ENCODE measurements at regions of chr9 and their contacts with region 1.

Region 1: DNA sequence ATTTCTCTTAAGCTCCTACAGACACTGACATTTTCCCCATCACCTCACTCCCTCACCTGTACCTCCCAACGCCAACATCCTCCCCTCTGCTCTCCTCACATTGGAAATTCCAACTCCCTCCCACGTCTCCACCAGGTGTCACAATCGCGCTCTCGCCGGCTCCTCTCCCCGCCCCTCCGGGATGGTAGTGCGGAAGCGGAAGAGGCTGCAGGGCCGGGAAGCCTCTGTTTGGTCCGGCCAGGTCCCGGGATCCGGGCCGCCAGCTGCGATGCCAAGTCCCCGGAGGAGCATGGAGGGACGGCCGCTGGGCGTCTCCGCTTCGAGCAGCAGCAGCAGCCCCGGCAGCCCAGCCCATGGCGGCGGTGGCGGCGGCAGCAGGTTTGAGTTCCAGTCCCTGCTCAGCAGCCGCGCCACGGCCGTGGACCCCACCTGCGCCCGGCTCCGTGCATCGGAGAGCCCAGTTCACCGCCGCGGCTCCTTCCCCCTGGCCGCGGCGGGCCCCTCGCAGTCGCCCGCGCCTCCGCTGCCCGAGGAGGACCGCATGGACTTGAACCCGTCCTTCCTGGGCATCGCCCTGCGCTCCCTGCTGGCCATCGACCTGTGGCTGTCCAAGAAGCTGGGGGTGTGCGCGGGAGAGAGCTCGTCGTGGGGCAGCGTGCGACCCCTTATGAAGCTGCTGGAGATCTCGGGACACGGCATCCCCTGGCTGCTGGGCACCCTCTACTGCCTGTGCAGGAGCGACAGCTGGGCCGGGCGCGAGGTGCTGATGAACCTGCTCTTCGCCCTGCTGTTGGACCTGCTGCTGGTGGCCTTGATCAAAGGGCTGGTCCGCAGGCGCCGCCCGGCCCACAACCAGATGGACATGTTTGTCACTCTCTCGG is at the start of gene PLPP6:
- DNase-seq: peak; percentile 87
- ATAC-seq: peak; percentile 84
- H3K4me3 Mint-ChIP-seq: peak within 1 kb of the TSS; percentile 82
- H3K27ac Mint-ChIP-seq: peak within 1 kb of the TSS; percentile 86
- H3K4me1 Mint-ChIP-seq: peaks cover 53% of the 10 kb centered on the region
- H3K27me3 Mint-ChIP-seq: no peaks in the 10 kb centered on the region
- total RNA-seq, gene PLPP6: 4.3 to 5.0 TPM

Region 2: DNA sequence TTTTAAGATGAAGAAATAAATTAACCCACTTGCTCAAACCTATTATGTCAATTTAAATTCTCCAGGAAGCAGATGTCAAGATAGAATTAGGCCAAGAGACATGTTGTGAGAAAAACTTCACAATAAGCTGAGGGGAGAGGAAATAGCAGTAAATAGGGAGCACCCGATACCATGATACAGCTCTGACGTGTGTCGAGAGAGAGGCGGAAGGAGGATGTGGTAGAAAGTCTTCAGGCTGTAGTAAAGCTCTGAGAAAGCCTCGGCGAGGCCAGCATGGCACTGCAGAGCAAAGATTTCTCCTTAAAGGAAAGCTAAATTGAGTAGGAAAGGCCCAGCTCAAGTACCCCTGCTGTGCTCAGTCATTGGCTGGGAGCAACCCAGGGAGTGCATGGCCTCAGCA is 1812.4 kb before region 1 on chr9:
- CTCF ChIA-PET with region 1: no interaction called
- POLR2A ChIA-PET with region 1: no interaction called
- intact Hi-C with region 1: loop called in 1 of 2 experiments (anchors 10 kb)
- DNase-seq: peak; percentile 20
- ATAC-seq: peak; percentile 57
- H3K4me3 Mint-ChIP-seq: no peak overlapping the region
- H3K27ac Mint-ChIP-seq: no peak overlapping the region
- H3K4me1 Mint-ChIP-seq: peaks cover 11% of the 10 kb centered on the region
- H3K27me3 Mint-ChIP-seq: peaks cover 11% of the 10 kb centered on the region

Region 3: DNA sequence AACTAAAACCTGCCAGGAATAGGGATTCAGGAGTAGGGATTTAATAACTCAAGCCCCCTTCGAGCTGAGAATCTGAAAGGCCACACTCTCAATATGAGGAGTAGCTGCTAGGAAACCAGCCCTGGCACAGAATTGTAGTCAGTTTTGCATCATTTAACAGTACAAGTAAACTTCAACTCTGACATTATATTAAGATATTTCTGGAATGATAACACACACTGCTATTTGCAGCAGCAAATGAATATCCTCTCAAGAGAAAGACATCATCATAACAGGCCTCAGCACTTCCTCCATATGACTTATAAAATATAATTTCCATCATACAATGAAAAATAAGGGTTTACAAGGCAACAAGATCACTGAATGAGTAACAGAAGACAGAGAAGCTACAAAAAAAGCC is 998.3 kb before region 1 on chr9:
- CTCF ChIA-PET with region 1: no interaction called
- POLR2A ChIA-PET with region 1: no interaction called
- intact Hi-C with region 1: no loop called
- DNase-seq: no peak
- ATAC-seq: no peak
- H3K4me3 Mint-ChIP-seq: no peak overlapping the region
- H3K27ac Mint-ChIP-seq: no peak overlapping the region
- H3K4me1 Mint-ChIP-seq: peaks cover 2% of the 10 kb centered on the region
- H3K27me3 Mint-ChIP-seq: no peaks in the 10 kb centered on the region

Region 4: GRCh38 chr9:4193391-4193790 is 469.0 kb before region 1 on chr9:
- CTCF ChIA-PET with region 1: no interaction called
- POLR2A ChIA-PET with region 1: no interaction called
- intact Hi-C with region 1: no loop called
- DNase-seq: no peak
- ATAC-seq: no peak
- H3K4me3 Mint-ChIP-seq: no peak overlapping the region
- H3K27ac Mint-ChIP-seq: no peak overlapping the region
- H3K4me1 Mint-ChIP-seq: no peaks in the 10 kb centered on the region
- H3K27me3 Mint-ChIP-seq: no peaks in the 10 kb centered on the region

Region 5: DNA sequence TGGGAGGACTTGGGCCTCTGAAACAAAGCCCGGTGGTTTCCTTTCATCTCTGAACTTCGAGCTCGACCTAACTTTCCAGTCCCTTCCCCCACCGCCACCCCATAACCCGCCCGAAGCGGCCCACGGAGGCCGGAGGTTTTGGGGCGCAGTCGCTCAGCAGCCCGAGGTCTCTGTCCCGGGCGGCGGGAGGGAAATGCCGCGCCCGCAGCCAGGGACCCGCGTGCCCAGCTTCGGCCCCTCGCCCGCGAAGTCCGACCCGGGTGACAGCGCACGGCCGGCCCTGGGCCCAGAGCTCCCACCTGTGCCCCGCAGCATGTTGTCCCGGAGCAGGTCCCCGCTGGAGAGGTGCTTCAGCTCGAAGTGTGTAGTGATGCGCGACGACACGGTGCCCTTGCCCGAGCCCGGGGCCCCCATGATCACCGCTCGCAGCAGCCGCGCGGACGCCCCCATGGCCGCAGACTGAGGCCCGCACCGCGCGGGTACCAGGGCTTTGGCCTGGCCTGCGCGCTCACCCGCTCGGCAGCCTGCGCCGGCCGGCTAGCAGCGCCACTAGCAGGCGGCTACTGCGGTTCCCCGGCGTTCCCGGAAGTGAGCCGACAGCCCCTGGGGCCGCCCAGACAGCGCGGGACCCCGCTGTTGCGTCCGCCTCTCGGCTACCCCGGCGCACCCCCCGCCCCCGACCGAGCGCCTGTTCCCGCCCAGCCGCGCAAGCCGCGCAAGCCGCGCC is 78.5 kb after region 1 on chr9 and contains the start of gene AK3:
- CTCF ChIA-PET with region 1: interaction called, 3 read pairs
- POLR2A ChIA-PET with region 1: no interaction called
- intact Hi-C with region 1: loop called (anchors 1 to 2 kb)
- DNase-seq: peak; percentile 91
- ATAC-seq: peak; percentile 87
- H3K4me3 Mint-ChIP-seq: peak within 1 kb of the TSS; percentile 88
- H3K27ac Mint-ChIP-seq: peak within 1 kb of the TSS; percentile 93
- H3K4me1 Mint-ChIP-seq: peaks cover 40% of the 10 kb centered on the region
- H3K27me3 Mint-ChIP-seq: no peaks in the 10 kb centered on the region
- total RNA-seq, gene AK3: 32.6 to 41.0 TPM

Region 6: DNA sequence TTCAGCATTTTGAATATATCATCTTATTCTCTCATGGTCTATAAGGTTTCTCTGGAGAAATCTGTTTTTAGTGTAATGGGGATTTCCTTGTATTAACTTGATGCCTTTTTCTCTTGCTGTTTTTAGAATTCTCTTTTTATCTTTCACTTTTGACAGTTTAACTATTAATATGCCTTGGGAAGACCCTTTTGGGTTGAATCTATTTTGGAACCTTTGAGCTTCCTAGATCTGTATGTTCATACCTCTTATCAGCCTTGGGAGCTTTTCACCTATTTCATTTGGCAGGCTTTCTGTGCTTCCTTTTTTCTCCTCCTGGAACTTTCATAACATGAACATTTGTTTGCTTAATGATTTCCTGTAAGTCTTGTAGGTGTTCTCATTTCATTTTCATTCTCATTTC is 152.6 kb after region 1 on chr9:
- CTCF ChIA-PET with region 1: no interaction called
- POLR2A ChIA-PET with region 1: no interaction called
- intact Hi-C with region 1: no loop called
- DNase-seq: no peak
- ATAC-seq: peak; percentile 39
- H3K4me3 Mint-ChIP-seq: no peak overlapping the region
- H3K27ac Mint-ChIP-seq: peak overlapping the region; percentile 76
- H3K4me1 Mint-ChIP-seq: peaks cover 32% of the 10 kb centered on the region
- H3K27me3 Mint-ChIP-seq: no peaks in the 10 kb centered on the region

Region 7: DNA sequence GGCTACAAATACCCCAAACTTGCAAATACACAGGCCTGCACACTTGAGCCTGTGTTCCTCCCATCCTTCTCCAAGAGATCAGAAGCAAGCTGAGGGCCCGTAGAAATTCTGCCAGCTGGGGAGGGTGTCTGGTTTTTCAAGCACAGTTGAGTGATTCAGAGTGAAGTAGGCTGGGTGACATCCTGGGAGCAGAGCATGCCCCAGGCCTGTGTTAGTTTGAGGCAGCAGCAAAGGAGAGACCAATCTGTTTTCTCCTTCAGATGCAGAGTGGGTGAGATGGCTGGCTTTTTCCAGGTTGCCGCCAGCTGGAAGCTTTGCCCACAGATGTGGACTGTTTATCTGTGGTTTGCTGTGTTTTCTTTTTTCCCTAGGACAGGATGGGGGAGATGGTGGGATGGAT is 193.5 kb after region 1 on chr9:
- CTCF ChIA-PET with region 1: no interaction called
- POLR2A ChIA-PET with region 1: no interaction called
- intact Hi-C with region 1: no loop called
- DNase-seq: no peak
- ATAC-seq: no peak
- H3K4me3 Mint-ChIP-seq: no peak overlapping the region
- H3K27ac Mint-ChIP-seq: no peak overlapping the region
- H3K4me1 Mint-ChIP-seq: peaks cover 12% of the 10 kb centered on the region
- H3K27me3 Mint-ChIP-seq: no peaks in the 10 kb centered on the region